PC-9 (cell line): ENCODE measurements at regions of chr1 and their contacts with region 1.

Region 1: GRCh38 chr1:46315669-46316403 is 12.3 kb downstream of the UQCRH start:
- DNase-seq: no peak
- H3K4me3 ChIP-seq: no peak overlapping the region
- H3K27ac ChIP-seq: no peak overlapping the region
- H3K4me1 ChIP-seq: no peaks in the 10 kb centered on the region
- H3K27me3 ChIP-seq: no peaks in the 10 kb centered on the region
- CTCF ChIP-seq: no peak

Region 2: DNA sequence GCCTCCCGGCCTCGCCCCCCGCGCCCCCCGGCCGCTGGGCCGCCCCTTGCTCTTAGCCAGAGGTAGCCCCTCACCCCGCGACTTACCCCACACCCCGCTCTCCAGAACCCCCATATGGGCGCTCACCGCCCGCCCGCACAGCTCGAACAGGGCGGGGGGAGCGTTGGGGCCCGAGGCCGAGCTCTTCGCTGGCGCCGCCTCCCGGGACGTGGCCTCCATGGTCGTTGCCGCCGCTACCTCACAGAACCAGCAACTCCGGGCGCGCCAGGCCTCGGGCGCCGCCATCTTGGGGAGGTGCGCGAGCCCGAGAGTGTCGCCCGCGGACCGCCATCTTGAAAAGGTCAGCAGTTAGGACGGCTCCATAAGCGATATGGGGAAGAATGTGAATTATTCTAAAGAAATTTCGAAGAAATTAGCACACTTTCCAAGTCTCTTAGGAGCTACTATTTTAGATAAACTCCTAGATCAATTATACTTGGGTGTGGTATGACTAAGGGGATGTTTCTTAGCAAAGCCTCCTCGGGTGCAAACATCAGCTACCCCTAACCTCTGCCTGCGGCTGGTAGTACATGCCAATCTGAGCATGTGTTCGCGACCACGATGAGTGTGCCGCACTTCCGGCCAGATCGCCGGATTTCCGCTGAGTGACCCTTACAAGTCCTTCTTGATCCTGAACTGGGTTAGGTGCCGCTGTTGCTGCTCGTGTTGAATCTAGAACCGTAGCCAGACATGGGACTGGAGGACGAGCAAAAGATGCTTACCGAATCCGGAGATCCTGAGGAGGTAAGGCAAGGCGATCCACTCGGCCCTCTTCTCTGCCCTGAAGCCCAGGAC is 12.6 kb before region 1 on chr1 and contains the starts of genes LRRC41 and UQCRH:
- CTCF ChIA-PET with region 1: no interaction called
- POLR2A ChIA-PET with region 1: interaction called, 25 read pairs
- intact Hi-C with region 1: no loop called
- DNase-seq: peak; percentile 94 to 95
- H3K4me3 ChIP-seq: peak within 1 kb of the TSS; percentile 95
- H3K27ac ChIP-seq: peak within 1 kb of the TSS; percentile 87
- H3K4me1 ChIP-seq: peaks cover 35% of the 10 kb centered on the region
- H3K27me3 ChIP-seq: no peaks in the 10 kb centered on the region
- CTCF ChIP-seq: 0 out of 2 replicates have a peak, but pooled peaks have one; percentile 12
- total RNA-seq, gene LRRC41: 65.9 and 66.3 TPM in 2 replicates
- total RNA-seq, gene UQCRH: 457 and 551 TPM in 2 replicates